AG04449 (cell line): ENCODE measurements at regions of chr12 and their contacts with region 1.

Region 1: GRCh38 chr12:47802324-47802735 is 17.4 kb downstream of the HDAC7 start:
- DNase-seq: no peak
- H3K4me3 ChIP-seq: no peak overlapping the region
- CTCF ChIP-seq: peak; percentile 20

Region 2: DNA sequence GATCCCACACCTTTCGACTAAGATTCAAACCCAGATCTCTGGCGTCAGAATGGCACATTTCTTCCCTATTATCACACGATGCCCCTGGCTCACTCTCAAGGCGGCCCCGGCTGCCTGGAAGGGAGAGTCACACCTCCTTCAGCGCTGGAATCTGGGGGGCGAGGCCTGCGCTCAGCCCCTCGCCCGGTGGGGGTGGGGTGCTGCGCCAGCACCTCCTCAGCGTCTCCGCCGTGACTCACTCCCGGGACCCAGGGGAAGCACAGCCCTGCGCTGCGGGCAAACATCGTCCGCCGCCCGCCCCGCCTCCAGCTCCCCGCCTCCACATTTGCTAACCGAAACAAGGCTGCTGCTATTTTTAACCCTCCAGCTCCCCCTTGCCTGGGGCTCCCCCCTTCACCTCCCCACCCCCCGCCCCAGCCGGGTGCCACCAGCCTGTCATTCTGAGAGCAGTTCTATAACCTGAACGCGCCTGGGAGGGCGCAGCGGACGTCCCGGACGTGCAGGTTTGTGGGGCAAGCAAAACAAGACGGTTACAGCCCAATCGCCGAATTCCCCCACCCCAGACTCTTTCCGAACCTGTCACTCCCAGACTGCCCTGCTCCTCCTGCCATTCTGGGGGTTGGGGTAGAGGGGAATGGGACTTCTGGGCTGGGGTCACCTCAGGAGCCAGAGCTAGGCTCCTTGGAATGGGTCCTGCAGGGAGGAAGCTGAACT is 10.6 kb after region 1 on chr12:
- CTCF ChIA-PET with region 1: interaction called, 18 read pairs
- POLR2A ChIA-PET with region 1: interaction called, 13 read pairs
- DNase-seq: peak; percentile 53
- H3K4me3 ChIP-seq: peak overlapping the region; percentile 48
- CTCF ChIP-seq: no peak